GM18951 (cell line): ENCODE measurements at regions of chr9 and their contacts with region 1.

Region 1: DNA sequence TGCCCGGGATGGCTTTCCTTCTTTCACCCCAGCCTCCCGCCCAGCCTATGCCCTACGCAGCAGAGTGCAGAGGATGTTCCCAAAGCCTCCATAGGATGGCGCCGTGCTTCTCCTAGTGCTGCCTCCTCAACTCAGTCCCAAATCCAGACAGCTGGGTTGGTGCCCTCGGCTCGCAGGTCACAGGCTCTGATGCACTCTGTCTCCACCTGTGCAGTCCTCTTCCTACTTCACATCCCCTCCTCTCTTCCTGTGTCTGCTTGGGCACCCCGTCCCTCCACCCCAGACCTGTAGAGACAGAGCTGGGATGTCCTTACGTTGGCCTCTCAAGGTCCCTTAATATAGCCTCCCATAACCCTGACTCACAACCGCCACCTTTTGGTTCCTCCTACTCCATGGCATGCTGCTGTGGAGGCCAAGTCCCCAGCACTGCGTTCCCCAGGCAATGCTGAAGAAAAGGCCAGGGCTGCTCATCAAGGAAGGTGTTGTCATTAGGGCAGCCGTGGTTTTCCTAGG is 314.4 kb downstream of the GADD45G start:
- POLR2A ChIP-seq: no peak

Region 2: DNA sequence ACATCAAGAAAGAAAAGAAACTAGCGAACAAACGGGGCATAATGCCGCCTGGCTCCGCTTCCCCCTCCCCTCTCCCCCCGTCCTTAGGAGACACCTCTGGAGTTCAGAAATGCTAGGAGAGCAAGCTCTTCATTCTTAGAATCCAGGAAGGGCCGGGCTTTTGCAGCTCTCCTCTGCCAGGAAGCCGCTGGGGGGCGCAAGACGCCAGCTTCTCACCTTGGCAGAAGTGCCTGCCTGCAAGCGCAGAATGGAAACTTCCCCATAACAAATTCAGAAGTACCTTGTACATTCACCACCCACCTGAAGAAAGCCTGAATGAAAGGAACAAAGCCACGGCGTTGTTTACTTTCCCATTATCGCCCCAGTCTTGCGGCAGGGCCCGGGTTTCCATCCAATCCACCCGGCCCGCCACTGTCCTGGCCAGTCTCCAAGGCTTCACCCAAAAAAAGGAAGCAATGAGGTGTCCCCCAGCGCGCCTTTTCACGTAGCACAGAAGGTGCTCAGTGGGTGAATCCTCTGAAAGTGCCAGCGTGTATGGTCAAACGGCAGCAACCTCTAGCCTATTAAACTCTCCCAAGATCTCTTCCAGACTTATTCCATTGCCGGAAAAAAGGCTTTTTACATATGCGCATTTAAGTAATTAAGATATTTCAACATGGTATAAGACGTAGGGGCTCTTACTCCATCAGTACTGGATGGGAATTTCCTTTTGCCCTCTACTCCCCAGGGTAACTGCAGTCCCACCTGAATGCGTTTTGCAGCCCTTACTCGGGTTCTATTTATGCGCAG is 316.1 kb before region 1 on chr9:
- in situ Hi-C with region 1: loop called (anchors 25 kb)
- POLR2A ChIP-seq: no peak

Region 3: DNA sequence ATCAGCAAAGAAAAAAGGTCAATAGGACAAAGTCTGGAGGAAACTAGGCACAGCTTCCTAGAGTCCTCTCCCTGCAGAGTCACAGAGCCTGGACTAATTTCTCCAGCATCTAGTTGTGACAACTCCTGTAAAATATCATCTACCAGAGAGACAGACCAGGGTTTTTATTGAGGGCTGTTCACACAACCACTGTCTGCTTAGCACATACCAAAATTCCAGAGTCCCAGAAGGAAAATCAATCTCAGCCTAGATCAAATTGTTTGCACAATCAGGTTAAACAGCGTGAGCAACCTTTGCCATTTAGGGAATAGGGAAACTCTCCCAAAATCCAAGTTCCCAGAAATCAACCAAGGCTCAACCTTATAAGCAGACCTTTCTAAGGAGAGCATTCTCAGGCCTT is 1072.7 kb after region 1 on chr9:
- in situ Hi-C with region 1: no loop called
- POLR2A ChIP-seq: no peak